Common myeloid progenitor, CD34-positive (primary cell): ENCODE measurements at regions of chr2 and their contacts with region 1.

Region 1: GRCh38 chr2:69196327-69197117 is 183.5 kb downstream of the ANTXR1 start:
- DNase-seq: no peak
- H3K4me3 ChIP-seq: no peak overlapping the region
- H3K27ac ChIP-seq: no peak overlapping the region
- H3K4me1 ChIP-seq: no peaks in the 10 kb centered on the region
- H3K27me3 ChIP-seq: peaks cover 0 to 4% (median 0%) of the 10 kb centered on the region in 5 experiments

Region 2: DNA sequence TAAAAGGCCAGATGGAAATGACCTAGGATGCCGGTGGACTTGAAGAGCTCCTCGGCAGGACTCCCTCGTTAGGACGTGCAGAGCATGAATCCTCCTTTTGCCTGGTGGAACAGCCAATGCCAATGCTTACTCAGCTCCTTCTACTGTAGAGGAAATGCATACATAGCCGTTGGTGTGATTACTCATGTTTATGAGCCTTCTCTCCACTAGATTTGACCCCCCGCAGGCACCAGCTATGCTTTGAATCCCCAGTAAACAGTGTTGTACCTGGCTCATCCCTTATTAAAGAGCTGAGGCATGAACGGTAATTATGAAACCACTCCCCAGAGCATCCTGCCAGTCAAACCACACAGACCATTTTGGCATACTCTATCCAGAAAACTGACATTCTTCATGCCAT is 10.7 kb before region 1 on chr2:
- CTCF ChIA-PET with region 1: interaction called, 10 read pairs
- POLR2A ChIA-PET with region 1: no interaction called
- DNase-seq: no peak
- H3K4me3 ChIP-seq: no peak overlapping the region
- H3K27ac ChIP-seq: no peak overlapping the region
- H3K4me1 ChIP-seq: no peaks in the 10 kb centered on the region
- H3K27me3 ChIP-seq: peaks cover 0 to 5% (median 2%) of the 10 kb centered on the region in 5 experiments